ENCODE measurements at regions of chr2 and their contacts with region 1.

Region 1: DNA sequence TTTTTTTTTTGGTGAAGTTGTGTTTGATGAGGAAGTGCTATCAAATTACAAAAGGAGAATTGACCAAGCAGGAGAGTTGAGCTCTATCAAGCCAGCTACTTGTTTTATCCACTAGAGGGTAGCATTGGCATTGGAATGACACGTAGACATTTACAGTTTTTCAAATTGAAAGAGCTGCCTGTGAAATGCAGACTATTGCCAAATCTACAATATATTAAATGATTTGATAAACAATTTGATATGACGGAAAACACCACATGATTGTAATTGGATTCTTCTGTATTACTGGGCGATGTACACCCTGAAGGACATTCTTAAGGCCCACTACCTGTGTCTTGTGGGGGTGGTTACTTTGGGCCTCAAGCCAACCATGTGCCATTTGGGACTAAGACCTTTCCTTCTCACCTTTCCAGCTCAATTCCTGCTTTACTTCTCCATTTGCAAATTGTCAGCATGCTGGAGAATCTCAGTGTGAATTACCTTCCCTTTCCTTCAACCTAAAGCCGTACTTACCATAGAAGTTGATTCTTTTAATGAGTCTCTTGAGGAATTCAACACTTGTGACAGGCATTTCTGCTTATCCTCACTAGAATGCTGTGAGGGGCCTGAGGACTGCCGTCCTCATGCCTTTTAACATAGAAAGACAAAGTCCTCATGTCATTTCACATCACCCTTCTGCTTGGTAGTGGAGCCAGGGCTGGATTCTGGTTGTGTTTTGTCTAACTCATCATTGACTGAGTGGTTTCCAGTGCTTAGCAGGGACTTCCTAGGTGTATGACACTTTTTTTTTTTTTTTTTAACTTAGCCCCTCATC is 134.8 kb upstream of the THUMPD2 start:
- DNase-seq: peak; percentile 88
- ATAC-seq: peak; percentile 85
- H3K4me3 ChIP-seq: no peak overlapping the region
- H3K27ac ChIP-seq: peak overlapping the region; percentile 94
- H3K4me1 ChIP-seq: peaks cover 5% of the 10 kb centered on the region
- H3K27me3 ChIP-seq: no peaks in the 10 kb centered on the region
- CTCF ChIP-seq: peak; percentile 90
- POLR2A ChIP-seq: 0 out of 2 replicates have a peak, but pooled peaks have one; percentile 37
- RAD21 ChIP-seq: peak; percentile 99

Region 2: GRCh38 chr2:40212804-40213470 is 299.1 kb after region 1 on chr2:
- CTCF ChIA-PET with region 1: no interaction called
- POLR2A ChIA-PET with region 1: interaction called, 3 read pairs
- dilution Hi-C with region 1: no loop called
- in situ Hi-C with region 1: no loop called
- intact Hi-C with region 1: loop called (anchors 10 kb)
- DNase-seq: peak; percentile 83
- ATAC-seq: peak; percentile 92
- H3K4me3 ChIP-seq: no peak overlapping the region
- H3K27ac ChIP-seq: peak overlapping the region; percentile 45; the same call in 1 of the 2 replicates
- H3K4me1 ChIP-seq: peaks cover 13% of the 10 kb centered on the region
- H3K27me3 ChIP-seq: no peaks in the 10 kb centered on the region
- CTCF ChIP-seq: peak; percentile 65
- POLR2A ChIP-seq: no peak
- RAD21 ChIP-seq: peak; percentile 75

Region 3: GRCh38 chr2:40448468-40449079 is 534.7 kb after region 1 on chr2:
- CTCF ChIA-PET with region 1: no interaction called
- POLR2A ChIA-PET with region 1: no interaction called
- dilution Hi-C with region 1: no loop called
- in situ Hi-C with region 1: loop called (anchors 10 kb)
- intact Hi-C with region 1: loop called (anchors 2 kb)
- DNase-seq: peak; percentile 52
- ATAC-seq: no peak
- H3K4me3 ChIP-seq: no peak overlapping the region
- H3K27ac ChIP-seq: no peak overlapping the region
- H3K4me1 ChIP-seq: peaks cover 6% of the 10 kb centered on the region
- H3K27me3 ChIP-seq: no peaks in the 10 kb centered on the region
- CTCF ChIP-seq: peak; percentile 51
- POLR2A ChIP-seq: no peak
- RAD21 ChIP-seq: peak; percentile 44

Region 4: DNA sequence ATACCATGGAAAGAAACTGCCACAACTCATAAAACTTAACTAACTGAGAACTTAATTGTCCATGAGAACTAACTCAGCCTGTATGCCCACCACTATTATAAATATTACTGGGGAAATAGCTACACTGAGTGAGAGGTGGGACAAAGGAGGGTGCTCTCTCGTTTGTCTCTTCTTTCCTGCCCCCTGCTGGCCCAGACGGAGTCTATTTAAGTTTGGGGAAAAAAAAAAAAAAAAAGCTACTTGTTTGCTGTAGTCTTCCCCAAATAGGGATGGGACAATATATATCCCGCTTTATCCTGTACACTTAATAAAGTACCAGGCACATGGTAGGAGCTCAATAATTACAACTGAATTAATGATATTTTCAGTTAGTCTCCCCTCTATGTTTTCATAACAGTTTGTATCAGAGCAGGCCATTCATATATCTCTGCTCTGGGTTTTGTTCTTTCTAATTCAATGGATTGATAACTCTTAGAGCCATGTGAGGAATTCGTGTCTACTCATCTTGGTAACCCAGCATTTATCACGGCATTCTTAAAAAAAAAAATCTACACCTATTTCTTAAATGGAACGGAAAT is 1486.3 kb after region 1 on chr2:
- CTCF ChIA-PET with region 1: no interaction called
- POLR2A ChIA-PET with region 1: no interaction called
- dilution Hi-C with region 1: no loop called
- in situ Hi-C with region 1: no loop called
- intact Hi-C with region 1: loop called (anchors 10 kb)
- DNase-seq: no peak
- ATAC-seq: no peak
- H3K4me3 ChIP-seq: no peak overlapping the region
- H3K27ac ChIP-seq: no peak overlapping the region
- H3K4me1 ChIP-seq: no peaks in the 10 kb centered on the region
- H3K27me3 ChIP-seq: no peaks in the 10 kb centered on the region
- CTCF ChIP-seq: peak; percentile 31
- POLR2A ChIP-seq: no peak
- RAD21 ChIP-seq: no peak

Region 5: GRCh38 chr2:41720331-41720730 is 1806.5 kb after region 1 on chr2:
- CTCF ChIA-PET with region 1: no interaction called
- POLR2A ChIA-PET with region 1: no interaction called
- dilution Hi-C with region 1: no loop called
- in situ Hi-C with region 1: loop called (anchors 25 kb)
- intact Hi-C with region 1: no loop called
- DNase-seq: no peak
- ATAC-seq: no peak
- H3K4me3 ChIP-seq: no peak overlapping the region
- H3K27ac ChIP-seq: no peak overlapping the region
- H3K4me1 ChIP-seq: no peaks in the 10 kb centered on the region; the same call in 1 of the 2 replicates
- H3K27me3 ChIP-seq: no peaks in the 10 kb centered on the region
- CTCF ChIP-seq: no peak
- POLR2A ChIP-seq: no peak
- RAD21 ChIP-seq: no peak